Ascending aorta (tissue), 2 donors: ENCODE measurements at regions of chr2 and their contacts with region 1.

Region 1: GRCh38 chr2:241508240-241509154 is at the start of gene STK25:
- DNase-seq: peak; percentile 91 to 98
- H3K4me3 ChIP-seq: peak within 1 kb of the TSS; percentile 88 to 95
- H3K27ac ChIP-seq: peak within 1 kb of the TSS; percentile 76 to 88
- H3K4me1 ChIP-seq: peaks cover 6 to 26% of the 10 kb centered on the region in 2 donors
- H3K27me3 ChIP-seq: no peaks in the 10 kb centered on the region
- CTCF ChIP-seq: no peak
- total RNA-seq, gene STK25: 259 TPM

Region 2: DNA sequence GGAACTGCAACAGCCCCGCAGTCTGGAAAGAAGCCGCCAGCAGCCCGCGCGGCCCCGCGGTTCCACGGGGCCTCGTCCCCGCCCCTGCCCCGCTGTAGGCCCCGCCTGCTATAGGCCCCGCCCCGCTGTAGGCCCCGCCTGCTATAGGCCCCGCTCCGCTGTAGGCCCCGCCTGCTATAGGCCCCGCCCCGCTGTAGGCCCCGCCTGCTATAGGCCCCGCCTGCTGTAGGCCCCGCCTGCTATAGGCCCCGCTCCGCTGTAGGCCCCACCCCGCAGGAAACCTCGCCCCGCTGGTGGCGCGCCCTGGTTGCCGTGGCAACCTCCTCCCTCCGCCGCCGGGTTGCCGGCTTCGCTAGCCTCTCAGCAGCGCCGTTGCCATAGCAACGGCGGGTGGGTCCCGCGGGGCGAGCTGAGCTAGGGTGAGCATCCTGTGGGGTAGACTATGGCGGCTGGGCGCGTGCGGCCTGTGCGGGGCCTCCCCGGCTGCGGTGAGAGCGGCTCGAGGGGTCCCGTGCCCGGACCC is 676.2 kb before region 1 on chr2:
- intact Hi-C with region 1: loop called (anchors 5 kb)
- DNase-seq: peak; percentile 65 to 93
- H3K4me3 ChIP-seq: peak overlapping the region; percentile 39 to 62
- H3K27ac ChIP-seq: no peak overlapping the region
- H3K4me1 ChIP-seq: peaks cover 5 to 7% of the 10 kb centered on the region in 2 donors
- H3K27me3 ChIP-seq: no peaks in the 10 kb centered on the region
- CTCF ChIP-seq: no peak

Region 3: DNA sequence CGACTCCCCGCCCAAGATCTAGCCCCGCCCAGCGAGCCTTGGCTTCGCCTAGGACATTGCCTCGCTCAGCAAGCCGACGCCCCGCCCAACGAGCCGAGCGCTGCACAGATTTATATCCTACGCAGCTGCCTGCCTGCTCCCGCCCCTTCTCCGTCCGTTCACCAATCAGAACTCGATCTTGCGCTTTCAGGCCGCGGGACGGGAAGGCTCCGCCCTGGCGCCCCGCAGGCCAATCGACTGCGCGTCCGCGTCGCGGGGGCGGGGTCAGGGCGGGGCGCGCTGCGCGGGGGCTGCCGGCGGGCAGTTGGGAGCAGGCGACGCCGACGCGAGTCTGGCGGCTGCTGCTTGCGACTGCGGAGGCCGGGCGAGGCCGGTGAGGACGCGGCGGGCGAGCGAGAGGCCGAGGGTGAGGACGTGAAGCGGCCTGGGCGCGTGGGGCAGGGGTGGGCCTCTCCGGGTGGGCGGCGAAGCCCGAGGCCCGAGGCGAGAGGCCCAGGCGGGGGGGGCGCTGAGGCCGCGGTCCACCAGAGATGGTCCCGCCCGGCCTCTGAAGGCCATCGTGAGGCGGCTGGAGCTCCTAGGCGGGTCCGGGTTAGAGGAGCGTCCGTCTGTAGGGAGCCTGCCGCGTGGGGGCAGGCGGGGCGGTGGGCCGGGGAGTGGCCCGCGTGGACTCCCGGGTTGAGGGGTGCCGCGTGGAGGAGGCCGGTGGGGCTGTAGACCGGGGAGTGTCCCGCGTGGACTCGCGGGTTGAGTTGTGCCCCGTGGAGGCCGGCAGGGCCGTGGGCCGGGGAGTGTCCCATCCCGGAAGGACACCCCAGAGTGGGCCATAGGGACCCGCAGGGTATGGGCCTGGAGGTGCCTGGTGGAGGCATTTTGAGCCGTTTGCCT is 152.3 kb before region 1 on chr2 and contains the start of gene FARP2:
- intact Hi-C with region 1: loop called (anchors 5 kb)
- DNase-seq: peak; percentile 99 to 100
- H3K4me3 ChIP-seq: peak within 1 kb of the TSS; percentile 69 to 79
- H3K27ac ChIP-seq: peak within 1 kb of the TSS; percentile 90
- H3K4me1 ChIP-seq: peaks cover 8 to 31% of the 10 kb centered on the region in 2 donors
- H3K27me3 ChIP-seq: no peaks in the 10 kb centered on the region
- CTCF ChIP-seq: no peak
- total RNA-seq, gene FARP2: 19.6 TPM

Region 4: DNA sequence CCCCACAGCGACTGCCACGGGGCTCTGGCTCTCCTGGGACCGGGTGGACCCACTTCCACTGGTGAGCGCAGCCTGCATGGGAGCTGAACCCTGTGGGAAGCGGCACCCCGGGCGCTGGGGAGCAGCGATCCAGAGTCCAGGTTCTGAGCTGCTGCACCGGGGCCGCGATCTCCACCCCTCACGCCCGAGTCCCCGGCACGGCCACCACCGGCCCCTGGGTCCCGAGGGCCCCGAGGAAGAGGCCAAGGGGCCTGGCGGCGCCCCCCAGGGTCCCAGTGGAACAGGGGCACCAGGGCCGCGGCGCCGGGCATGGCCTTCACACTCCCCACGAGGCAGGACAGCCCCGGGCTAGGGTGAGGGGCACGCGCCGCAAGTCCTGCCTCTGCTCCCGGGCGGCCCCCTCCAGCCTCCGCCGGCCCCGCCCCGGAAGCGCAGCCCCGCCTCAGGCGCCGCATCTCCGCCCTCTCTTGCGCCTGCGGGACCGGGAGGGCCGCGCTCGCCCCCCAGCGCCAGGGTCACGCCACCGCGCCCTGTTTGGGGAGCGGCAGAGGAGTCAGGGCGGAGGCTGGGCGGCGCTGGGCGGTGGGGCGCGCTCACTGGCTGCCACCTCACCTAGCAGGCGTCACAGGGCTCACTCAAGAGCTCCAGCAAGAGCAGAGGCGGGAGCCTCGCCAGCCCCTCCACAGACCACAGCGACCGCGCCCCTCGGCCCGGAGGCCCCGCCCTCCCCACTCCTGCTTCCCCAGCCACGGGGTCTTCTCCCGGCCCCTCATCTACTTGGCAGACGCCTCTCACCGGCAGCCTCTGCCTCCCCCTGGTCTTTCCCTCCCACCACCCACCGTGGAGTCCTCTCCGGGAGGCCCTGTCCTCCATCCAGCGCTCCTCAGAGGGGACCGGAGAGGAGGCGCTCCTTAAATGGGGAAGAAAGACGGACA is 101.6 kb after region 1 on chr2:
- intact Hi-C with region 1: loop called (anchors 2 kb)
- DNase-seq: peak; percentile 49 to 93
- H3K4me3 ChIP-seq: peak overlapping the region; percentile 47 to 89
- H3K27ac ChIP-seq: peak overlapping the region; percentile 86 to 92
- H3K4me1 ChIP-seq: peaks cover 0 to 3% of the 10 kb centered on the region in 2 donors
- H3K27me3 ChIP-seq: no peaks in the 10 kb centered on the region
- CTCF ChIP-seq: peak; percentile 47 to 75 (median 69)

Region 5: DNA sequence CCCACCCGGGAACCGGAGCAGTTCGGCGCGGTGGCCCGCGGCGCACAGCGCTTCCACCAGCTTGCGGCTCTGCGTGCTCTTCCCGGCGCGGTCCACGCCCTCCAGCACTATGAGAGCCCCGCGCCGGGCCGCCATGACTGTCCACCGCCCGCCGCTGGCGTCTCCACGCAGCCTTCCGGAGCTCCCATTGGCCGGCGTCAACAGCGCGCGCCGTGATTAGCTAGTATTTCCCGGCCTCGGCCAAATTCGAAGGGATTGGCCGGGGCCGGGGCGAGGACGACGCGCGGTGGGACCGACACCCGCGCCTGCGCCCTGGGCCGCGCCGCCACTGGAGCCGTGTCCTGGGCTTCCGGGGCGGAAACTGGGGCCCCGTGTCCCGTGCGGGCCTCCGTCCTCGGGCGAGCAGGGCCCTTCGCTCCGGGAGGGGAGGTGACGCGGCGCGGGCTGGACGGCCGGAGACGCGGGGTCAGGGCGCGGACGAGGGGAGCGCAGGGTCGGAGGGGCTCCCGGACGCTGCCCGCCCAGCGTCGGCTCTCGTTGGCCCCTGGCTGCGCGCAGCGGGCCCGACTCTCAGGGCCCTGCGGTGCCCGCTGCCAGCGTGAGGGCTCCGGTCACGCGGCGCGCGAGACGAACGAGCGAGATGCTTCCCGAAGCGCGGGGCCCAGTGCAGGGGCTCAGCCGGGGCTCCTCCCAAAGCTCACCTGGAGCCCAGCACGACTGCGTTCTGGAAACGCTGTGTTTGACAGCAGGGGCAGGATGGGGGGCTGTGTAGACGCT is 178.3 kb after region 1 on chr2 and contains the start of gene DTYMK:
- intact Hi-C with region 1: loop called (anchors 10 kb)
- DNase-seq: peak; percentile 84 to 97
- H3K4me3 ChIP-seq: peak within 1 kb of the TSS; percentile 85 to 94
- H3K27ac ChIP-seq: peak within 1 kb of the TSS; percentile 90 to 94
- H3K4me1 ChIP-seq: peaks cover 7 to 18% of the 10 kb centered on the region in 2 donors
- H3K27me3 ChIP-seq: no peaks in the 10 kb centered on the region
- CTCF ChIP-seq: no peak
- total RNA-seq, gene DTYMK: 25.0 TPM

Region 6: GRCh38 chr2:241844066-241844728 is 335.7 kb after region 1 on chr2:
- intact Hi-C with region 1: no loop called
- DNase-seq: peak; percentile 35 to 88
- H3K4me3 ChIP-seq: peak overlapping the region; percentile 54 to 63
- H3K27ac ChIP-seq: peak overlapping the region; percentile 46 to 60
- H3K4me1 ChIP-seq: peaks cover 8% of the 10 kb centered on the region in 2 donors
- H3K27me3 ChIP-seq: no peaks in the 10 kb centered on the region
- CTCF ChIP-seq: no peak